RWPE1 (cell line): ENCODE measurements at regions of chr5 and their contacts with region 1.

Region 1: GRCh38 chr5:95224701-95225459 is 60.0 kb downstream of the MCTP1 start:
- DNase-seq: no peak
- H3K27ac ChIP-seq: no peak overlapping the region
- CTCF ChIP-seq: no peak

Region 2: GRCh38 chr5:95087816-95088317 is 137.0 kb before region 1 on chr5:
- CTCF ChIA-PET with region 1: no interaction called
- POLR2A ChIA-PET with region 1: no interaction called
- DNase-seq: no peak
- H3K27ac ChIP-seq: no peak overlapping the region
- CTCF ChIP-seq: no peak

Region 3: GRCh38 chr5:95177456-95177855 is 47.4 kb before region 1 on chr5:
- CTCF ChIA-PET with region 1: no interaction called
- POLR2A ChIA-PET with region 1: interaction called, 14 read pairs
- DNase-seq: no peak
- H3K27ac ChIP-seq: no peak overlapping the region
- CTCF ChIP-seq: no peak

Region 4: GRCh38 chr5:95471942-95472341 is 247.1 kb after region 1 on chr5:
- CTCF ChIA-PET with region 1: no interaction called
- POLR2A ChIA-PET with region 1: no interaction called
- DNase-seq: no peak
- H3K27ac ChIP-seq: no peak overlapping the region
- CTCF ChIP-seq: no peak